Mammary epithelial cell (primary cell): ENCODE measurements at regions of chr1 and their contacts with region 1.

Region 1: GRCh38 chr1:97243973-97244560 is 522.5 kb downstream of the PTBP2 start:
- DNase-seq: peak; percentile 5
- H3K4me3 ChIP-seq: no peak overlapping the region
- H3K27ac ChIP-seq: no peak overlapping the region
- H3K4me1 ChIP-seq: no peaks in the 10 kb centered on the region
- H3K27me3 ChIP-seq: no peaks in the 10 kb centered on the region
- CTCF ChIP-seq: peak; percentile 51 to 57

Region 2: GRCh38 chr1:96979304-96980268 is 264.5 kb before region 1 on chr1:
- CTCF ChIA-PET with region 1: no interaction called
- dilution Hi-C with region 1: no loop called
- in situ Hi-C with region 1: loop called in 1 of 2 experiments (anchors 25 kb)
- intact Hi-C with region 1: no loop called
- DNase-seq: no peak
- H3K4me3 ChIP-seq: no peak overlapping the region
- H3K27ac ChIP-seq: no peak overlapping the region
- H3K4me1 ChIP-seq: no peaks in the 10 kb centered on the region
- H3K27me3 ChIP-seq: no peaks in the 10 kb centered on the region
- CTCF ChIP-seq: no peak

Region 3: DNA sequence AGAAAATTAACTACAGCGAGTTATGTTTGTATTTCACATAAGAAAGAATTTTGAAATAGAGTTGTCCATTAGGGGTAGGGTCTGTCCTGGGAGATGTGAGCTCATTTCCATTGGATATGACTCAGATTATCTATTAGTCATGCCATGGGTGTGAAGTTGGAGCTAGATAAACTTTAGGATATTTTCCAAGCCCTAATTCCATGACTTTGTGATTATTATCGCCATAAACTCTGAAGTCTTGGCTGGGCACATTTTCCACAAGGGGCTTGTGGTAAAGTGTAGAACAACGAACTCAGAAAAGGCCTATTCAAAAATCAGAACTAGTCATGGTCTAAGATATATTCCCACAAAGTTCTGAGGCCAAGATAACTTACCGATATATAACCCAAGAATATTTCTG is 280.1 kb after region 1 on chr1:
- CTCF ChIA-PET with region 1: interaction called, 3 read pairs
- dilution Hi-C with region 1: no loop called
- in situ Hi-C with region 1: no loop called
- intact Hi-C with region 1: loop called (anchors 1 kb)
- DNase-seq: no peak
- H3K4me3 ChIP-seq: no peak overlapping the region
- H3K27ac ChIP-seq: no peak overlapping the region
- H3K4me1 ChIP-seq: no peaks in the 10 kb centered on the region
- H3K27me3 ChIP-seq: no peaks in the 10 kb centered on the region
- CTCF ChIP-seq: no peak

Region 4: DNA sequence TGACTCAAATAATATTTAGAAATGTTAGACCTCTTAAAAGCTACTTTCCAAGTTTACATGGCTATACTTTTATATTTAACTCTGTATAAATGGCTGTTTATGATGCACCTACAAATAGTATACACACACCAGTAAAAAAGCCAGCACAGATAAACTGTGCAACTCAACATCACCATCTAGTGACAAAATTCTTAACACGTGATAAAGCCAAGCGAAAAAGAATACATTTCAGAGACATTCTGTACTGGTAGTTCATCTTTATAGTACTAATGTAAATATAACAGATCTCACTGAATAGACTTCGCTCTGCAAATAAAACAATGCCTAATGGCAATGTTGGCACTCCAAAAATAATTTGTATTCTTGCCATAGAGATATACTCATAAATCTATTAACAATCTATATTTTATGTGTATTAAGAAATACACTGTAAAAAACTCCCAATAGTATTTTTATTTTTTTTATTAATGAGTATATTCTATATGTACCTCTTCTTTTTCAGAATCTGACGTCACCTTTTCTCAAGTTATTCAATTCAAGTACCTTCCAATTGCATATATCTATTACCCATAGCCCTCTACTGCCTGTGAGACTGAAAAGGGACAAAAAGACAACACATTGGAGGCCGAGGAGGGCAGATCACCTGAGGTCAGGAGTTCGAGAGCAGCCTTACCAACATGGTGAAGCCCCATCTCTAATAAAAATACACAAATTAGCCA is 576.6 kb after region 1 on chr1:
- CTCF ChIA-PET with region 1: no interaction called
- dilution Hi-C with region 1: no loop called
- in situ Hi-C with region 1: no loop called
- intact Hi-C with region 1: loop called (anchors 1 kb)
- DNase-seq: peak; percentile 23
- H3K4me3 ChIP-seq: no peak overlapping the region
- H3K27ac ChIP-seq: no peak overlapping the region
- H3K4me1 ChIP-seq: no peaks in the 10 kb centered on the region
- H3K27me3 ChIP-seq: no peaks in the 10 kb centered on the region
- CTCF ChIP-seq: peak; percentile 36 to 53

Region 5: DNA sequence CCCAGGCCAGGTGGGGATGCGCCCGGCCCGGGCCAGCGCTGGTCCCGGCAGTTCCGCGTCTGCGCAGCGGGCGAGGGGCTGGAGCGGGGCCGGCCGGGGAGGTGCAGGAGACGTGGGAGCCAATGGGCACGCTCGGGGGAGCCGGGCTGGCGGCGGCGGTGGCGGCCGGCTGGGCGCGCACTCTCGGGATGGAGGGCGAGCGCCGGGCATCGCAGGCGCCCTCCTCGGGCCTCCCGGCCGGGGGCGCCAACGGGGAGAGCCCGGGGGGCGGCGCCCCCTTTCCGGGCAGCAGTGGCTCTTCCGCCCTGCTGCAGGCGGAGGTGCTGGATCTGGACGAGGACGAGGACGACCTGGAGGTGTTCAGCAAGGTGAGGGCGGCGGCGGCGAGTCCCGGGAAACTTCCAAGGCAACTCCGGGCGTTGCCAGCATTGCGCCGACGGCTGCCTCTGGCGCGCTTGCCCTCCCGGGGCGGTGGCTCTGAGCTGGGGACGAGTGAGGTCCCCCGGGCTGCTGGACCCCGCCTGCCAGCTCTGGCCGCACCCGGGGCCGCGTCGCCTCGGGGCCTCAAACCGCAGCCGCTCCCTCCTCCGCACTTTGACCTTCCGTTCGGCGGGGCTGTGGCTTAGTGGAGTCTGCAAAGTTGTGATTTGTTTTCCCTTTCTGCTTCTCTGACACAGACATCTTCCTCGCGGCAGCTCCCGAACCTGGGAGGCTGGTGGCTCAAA is 1417.6 kb after region 1 on chr1 and contains the start of gene SNX7:
- CTCF ChIA-PET with region 1: no interaction called
- dilution Hi-C with region 1: no loop called
- in situ Hi-C with region 1: no loop called
- intact Hi-C with region 1: loop called (anchors 5 kb)
- DNase-seq: peak; percentile 83
- H3K4me3 ChIP-seq: peak within 1 kb of the TSS; percentile 85 to 92 (median 88)
- H3K27ac ChIP-seq: peak within 1 kb of the TSS; percentile 66
- H3K4me1 ChIP-seq: no peaks in the 10 kb centered on the region
- H3K27me3 ChIP-seq: no peaks in the 10 kb centered on the region
- CTCF ChIP-seq: peak in 1 of 2 donors; percentile 16
- total RNA-seq, gene SNX7: 51.2 to 53.0 TPM